Activated CD4-positive, alpha-beta memory T cell treated with anti-CD3 and anti-CD28 coated beads for 36 hours (primary cell): ENCODE measurements at regions of chr11 and their contacts with region 1.

Region 1: DNA sequence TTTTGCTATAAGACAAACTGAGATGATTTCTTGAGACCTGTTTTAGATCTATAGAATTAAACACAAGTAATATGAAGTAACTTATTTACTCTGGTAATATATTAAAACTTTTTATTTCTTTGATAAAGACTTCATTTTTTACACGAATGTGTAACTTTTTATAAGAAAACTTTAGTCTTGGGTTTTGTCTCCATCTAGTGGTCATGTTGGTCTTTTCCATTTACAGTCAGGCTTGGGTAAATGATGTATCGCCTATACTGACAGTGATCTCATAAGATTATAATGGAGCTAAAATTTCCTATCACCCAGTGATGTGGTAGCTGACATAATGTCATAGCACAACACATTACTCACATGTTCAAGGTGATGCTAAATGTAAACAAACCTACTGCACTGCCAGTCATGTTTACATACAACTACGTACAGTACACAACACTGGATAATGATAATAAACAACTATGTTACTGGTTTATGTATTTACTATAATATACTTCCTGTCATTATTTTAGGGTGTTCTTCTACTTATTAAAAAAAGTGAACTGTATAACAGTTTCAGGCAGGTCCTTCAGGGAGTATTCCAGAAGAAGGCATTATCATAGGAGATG is 7.5 kb upstream of the C11orf97 start:
- DNase-seq: no peak
- H3K4me3 Mint-ChIP-seq: no peak overlapping the region
- H3K27ac Mint-ChIP-seq: no peak overlapping the region
- H3K4me1 Mint-ChIP-seq: no peaks in the 10 kb centered on the region
- H3K27me3 Mint-ChIP-seq: no peaks in the 10 kb centered on the region

Region 2: GRCh38 chr11:93895106-93895862 is 609.5 kb before region 1 on chr11:
- CTCF ChIA-PET with region 1: interaction called, 13 read pairs
- POLR2A ChIA-PET with region 1: no interaction called
- intact Hi-C with region 1: no loop called
- DNase-seq: no peak
- H3K4me3 Mint-ChIP-seq: no peak overlapping the region
- H3K27ac Mint-ChIP-seq: no peak overlapping the region
- H3K4me1 Mint-ChIP-seq: no peaks in the 10 kb centered on the region
- H3K27me3 Mint-ChIP-seq: peaks cover 34% of the 10 kb centered on the region

Region 3: DNA sequence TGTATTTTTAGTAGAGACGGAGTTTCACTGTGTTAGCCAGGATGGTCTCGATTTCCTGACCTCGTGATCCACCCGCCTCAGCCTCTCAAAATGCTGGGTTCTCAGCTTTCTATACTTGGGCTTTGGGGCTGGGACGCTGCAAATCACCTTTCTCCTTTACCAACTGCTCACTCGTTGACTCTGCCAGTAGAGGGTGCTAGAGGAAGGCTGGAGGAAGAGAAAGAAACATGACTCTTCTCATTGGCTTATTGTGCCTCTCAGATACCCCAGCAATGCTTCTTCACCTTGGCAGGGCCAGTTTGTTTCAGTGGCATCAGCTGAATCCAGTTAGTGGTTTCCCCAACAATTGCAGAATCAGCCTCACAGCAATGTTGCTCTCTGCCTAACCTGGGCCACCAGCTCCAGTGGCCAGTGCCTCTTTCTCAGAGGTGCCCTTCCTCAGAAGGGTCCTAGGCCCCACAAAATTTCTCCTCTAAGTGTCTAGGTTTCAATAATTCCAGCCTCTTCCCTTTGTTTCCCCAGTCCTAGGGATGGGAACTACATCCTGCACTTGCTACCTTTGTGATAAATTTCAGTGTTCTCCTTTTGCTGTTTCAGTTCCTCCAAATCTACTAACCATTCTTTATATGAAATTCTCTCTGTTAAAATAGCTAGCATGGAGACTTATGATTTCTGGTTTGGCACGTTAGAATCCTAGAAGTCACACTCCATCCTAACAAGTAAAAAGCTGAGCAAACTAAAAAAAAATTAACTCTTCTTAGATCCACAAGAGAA is 582.9 kb before region 1 on chr11:
- CTCF ChIA-PET with region 1: interaction called, 4 read pairs
- POLR2A ChIA-PET with region 1: no interaction called
- intact Hi-C with region 1: loop called (anchors 1 kb)
- DNase-seq: peak; percentile 30
- H3K4me3 Mint-ChIP-seq: no peak overlapping the region
- H3K27ac Mint-ChIP-seq: no peak overlapping the region
- H3K4me1 Mint-ChIP-seq: no peaks in the 10 kb centered on the region
- H3K27me3 Mint-ChIP-seq: peaks cover 23% of the 10 kb centered on the region

Region 4: DNA sequence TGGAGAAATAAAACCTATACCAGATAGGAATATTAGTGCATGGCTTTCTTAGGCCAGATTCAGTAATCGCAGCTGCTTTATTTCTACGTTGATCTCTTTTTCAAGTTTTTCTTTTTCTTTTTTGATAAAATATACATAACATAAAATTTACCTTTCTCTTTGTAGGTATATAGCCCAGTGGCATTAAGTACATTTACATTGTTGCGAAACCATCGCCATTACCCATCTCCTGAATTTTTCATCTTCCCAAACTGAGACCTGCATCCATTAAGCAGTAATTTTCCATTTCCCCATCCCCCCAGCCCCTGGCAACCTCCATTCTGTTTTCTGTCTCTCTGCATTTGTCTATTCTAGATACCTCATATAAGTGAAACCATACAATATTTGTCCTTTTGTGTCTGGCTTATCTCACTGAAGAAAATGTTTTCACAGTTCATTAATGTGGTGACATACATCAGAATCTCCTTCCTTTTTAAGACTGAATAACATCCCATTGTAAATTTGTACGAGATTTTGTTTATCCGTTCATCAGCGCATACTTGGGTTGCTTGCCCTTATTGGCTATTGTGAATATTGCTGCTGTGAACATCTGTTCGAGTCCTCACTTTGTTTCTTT is 334.8 kb before region 1 on chr11:
- CTCF ChIA-PET with region 1: interaction called, 4 read pairs
- POLR2A ChIA-PET with region 1: no interaction called
- intact Hi-C with region 1: loop called (anchors 1 kb)
- DNase-seq: no peak
- H3K4me3 Mint-ChIP-seq: no peak overlapping the region
- H3K27ac Mint-ChIP-seq: no peak overlapping the region
- H3K4me1 Mint-ChIP-seq: peaks cover 17% of the 10 kb centered on the region
- H3K27me3 Mint-ChIP-seq: no peaks in the 10 kb centered on the region

Region 5: GRCh38 chr11:94325681-94326080 is 179.1 kb before region 1 on chr11:
- CTCF ChIA-PET with region 1: interaction called, 13 read pairs
- POLR2A ChIA-PET with region 1: no interaction called
- intact Hi-C with region 1: loop called (anchors 1 kb)
- DNase-seq: peak; percentile 67
- H3K4me3 Mint-ChIP-seq: no peak overlapping the region
- H3K27ac Mint-ChIP-seq: no peak overlapping the region
- H3K4me1 Mint-ChIP-seq: no peaks in the 10 kb centered on the region
- H3K27me3 Mint-ChIP-seq: peaks cover 3% of the 10 kb centered on the region

Region 6: DNA sequence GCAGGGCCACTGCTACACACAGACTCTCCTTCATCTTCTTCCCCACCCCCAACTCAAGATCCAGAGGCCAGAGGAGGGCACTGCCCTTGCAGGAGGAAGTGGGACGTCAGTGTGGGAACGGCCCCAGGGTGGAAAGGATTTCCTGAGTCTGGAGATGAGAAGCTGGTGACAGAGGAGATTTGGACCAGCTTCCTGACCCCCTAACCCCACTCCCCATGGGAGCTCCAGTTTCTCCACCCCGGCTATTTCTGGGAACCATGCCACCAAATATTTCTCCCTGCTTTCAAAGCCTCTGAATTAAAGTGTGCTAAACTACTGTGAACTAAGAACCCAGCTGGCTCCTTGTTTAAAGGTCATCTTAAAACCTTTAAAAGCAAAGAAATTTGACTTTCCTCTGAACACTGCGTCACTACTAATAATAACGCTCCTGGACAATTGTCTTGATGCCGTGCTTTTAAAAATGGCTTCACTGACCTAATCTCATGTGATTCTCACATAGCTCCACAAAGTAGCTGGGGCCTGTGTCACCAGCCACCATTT is 422.0 kb after region 1 on chr11:
- CTCF ChIA-PET with region 1: no interaction called
- POLR2A ChIA-PET with region 1: no interaction called
- intact Hi-C with region 1: no loop called
- DNase-seq: no peak
- H3K4me3 Mint-ChIP-seq: no peak overlapping the region
- H3K27ac Mint-ChIP-seq: no peak overlapping the region
- H3K4me1 Mint-ChIP-seq: peaks cover 27% of the 10 kb centered on the region
- H3K27me3 Mint-ChIP-seq: no peaks in the 10 kb centered on the region